Activated naive CD4-positive, alpha-beta T cell treated with anti-CD3 and anti-CD28 coated beads for 36 hours (primary cell): ENCODE measurements at regions of chr17 and their contacts with region 1.

Region 1: DNA sequence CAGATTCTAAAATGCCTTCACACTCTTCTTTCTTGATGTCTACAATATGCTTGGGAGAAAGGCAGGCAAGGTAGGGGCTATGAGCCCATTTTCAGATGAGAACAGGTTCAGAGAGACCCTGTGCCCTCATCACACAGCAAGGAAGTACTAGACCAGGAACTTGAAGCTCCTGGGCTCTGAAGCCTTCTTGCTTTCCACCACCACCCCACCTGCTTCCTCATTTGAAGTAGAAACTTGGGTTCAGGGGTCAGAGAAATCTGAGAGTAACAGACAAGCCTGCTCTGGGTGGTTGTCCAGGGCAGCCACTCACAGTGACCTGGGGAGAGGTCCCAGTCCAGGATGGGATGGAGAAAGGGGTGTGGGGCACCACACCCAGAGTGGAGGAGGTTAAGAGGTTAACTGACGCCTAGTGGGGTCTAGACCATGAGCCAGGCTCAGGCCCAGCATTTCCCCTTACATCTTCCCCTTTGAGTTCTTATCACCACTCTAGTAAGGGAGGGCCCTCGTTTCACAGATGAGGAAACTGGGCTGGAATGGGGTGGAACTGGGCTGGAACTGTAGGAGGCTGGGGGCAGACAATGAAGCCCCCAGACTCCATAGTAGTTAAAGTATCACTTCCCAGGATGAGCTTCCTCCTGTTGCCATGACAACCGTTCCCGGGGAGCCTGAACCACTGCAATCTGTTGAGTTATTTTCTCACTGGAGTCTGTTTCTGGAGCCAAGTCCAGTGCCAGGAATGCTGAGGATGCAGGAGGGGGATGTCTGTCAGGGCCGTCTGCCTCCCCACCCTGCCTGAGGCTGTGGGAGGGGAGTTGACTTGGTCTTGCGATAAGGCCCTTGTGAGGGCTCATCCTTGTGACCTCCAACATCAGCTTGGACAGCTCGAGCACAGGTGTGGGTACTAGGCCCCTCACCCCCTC is 16.2 kb upstream of the PHF12 start:
- DNase-seq: no peak
- H3K4me3 Mint-ChIP-seq: no peak overlapping the region
- H3K27ac Mint-ChIP-seq: no peak overlapping the region
- H3K4me1 Mint-ChIP-seq: no peaks in the 10 kb centered on the region
- H3K27me3 Mint-ChIP-seq: peaks cover 4% of the 10 kb centered on the region

Region 2: DNA sequence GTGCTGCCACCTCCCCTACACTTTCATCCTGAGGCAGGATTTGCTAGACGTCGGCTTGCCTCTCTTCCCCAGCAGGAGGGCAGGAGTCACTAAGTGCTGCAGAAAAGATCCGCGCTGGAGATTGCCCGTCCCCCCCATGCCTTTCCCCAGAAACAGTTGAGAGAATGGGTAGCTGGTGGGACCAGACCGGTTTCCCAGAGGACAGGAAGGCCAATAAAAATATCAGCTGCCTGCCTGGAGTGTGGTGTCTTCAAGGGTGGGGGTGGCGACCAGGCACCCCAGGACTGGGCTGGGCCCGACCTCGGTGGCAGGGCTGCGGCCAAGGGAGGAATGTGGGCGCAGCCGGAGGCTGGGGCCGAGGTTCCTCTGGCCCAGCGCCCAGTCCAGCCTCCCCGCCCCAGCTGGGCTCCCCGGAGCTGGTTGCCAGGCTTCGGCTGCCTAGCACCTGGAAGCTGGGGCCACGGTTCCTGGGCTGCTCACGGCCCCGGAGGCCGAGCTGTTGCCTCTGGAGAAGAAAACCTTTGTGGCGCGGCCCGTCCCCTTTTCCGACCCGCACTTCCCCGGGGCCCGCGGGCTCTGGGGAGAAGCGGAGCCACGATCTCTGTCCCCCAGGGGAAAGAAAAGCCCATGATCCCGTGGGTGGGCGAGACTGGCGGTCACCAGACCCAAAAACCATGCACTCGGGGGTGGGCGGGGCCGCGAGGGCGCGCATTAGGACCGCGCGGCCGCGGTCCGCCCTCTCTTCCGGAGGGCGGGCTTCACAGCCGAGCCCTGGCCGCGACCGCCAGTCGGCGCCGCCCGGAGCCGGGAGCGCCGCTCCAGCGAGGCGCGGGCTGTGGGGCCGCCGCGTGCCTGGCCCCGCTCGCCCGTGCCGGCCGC is 224.0 kb before region 1 on chr17 and contains the start of gene TRAF4:
- CTCF ChIA-PET with region 1: no interaction called
- intact Hi-C with region 1: no loop called
- DNase-seq: peak; percentile 74
- H3K4me3 Mint-ChIP-seq: peak within 1 kb of the TSS; percentile 91
- H3K27ac Mint-ChIP-seq: peak within 1 kb of the TSS; percentile 85
- H3K4me1 Mint-ChIP-seq: peaks cover 45% of the 10 kb centered on the region
- H3K27me3 Mint-ChIP-seq: no peaks in the 10 kb centered on the region
- total RNA-seq, gene TRAF4: 75.9 to 80.4 TPM

Region 3: GRCh38 chr17:28889996-28890395 is 77.5 kb before region 1 on chr17:
- CTCF ChIA-PET with region 1: no interaction called
- intact Hi-C with region 1: no loop called
- DNase-seq: no peak
- H3K4me3 Mint-ChIP-seq: no peak overlapping the region
- H3K27ac Mint-ChIP-seq: peak overlapping the region; percentile 53
- H3K4me1 Mint-ChIP-seq: peaks cover 49% of the 10 kb centered on the region
- H3K27me3 Mint-ChIP-seq: no peaks in the 10 kb centered on the region

Region 4: DNA sequence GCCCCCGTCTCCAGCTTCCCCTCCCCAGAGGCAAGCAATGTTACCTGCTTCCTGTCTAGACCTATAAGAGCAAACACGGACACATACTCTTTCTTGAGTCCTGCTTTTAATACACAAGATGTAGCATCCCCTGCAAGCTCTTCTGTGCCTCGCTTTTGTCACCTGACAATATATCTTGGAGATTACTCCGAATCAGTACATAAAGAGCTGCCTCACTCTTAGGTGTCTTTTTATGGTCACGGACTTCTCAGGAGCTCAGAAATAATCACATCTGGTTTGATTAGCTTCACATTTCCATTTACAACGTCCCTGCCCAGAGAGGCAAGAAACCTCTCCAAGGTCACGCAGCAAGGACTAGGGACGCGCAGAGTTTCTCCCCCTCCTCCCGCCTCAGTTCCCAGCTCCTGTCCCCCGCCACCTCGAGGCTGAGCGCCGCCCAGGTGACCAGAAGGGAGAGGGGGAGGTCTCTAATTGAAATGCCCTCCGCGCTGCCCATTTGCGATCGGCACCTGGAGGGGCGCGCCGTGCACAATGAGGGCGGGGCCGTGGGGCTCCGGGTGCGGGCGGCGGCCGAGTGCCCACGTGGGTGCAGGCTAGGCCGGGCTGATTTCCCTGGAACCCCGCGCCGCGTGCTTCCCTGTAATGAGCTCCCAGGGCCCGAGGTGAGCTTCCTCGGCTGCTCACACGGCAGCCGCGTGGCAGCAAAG is 52.1 kb after region 1 on chr17:
- CTCF ChIA-PET with region 1: interaction called, 14 read pairs
- intact Hi-C with region 1: no loop called
- DNase-seq: no peak
- H3K4me3 Mint-ChIP-seq: no peak overlapping the region
- H3K27ac Mint-ChIP-seq: no peak overlapping the region
- H3K4me1 Mint-ChIP-seq: peaks cover 5% of the 10 kb centered on the region
- H3K27me3 Mint-ChIP-seq: peaks cover 41% of the 10 kb centered on the region

Region 5: DNA sequence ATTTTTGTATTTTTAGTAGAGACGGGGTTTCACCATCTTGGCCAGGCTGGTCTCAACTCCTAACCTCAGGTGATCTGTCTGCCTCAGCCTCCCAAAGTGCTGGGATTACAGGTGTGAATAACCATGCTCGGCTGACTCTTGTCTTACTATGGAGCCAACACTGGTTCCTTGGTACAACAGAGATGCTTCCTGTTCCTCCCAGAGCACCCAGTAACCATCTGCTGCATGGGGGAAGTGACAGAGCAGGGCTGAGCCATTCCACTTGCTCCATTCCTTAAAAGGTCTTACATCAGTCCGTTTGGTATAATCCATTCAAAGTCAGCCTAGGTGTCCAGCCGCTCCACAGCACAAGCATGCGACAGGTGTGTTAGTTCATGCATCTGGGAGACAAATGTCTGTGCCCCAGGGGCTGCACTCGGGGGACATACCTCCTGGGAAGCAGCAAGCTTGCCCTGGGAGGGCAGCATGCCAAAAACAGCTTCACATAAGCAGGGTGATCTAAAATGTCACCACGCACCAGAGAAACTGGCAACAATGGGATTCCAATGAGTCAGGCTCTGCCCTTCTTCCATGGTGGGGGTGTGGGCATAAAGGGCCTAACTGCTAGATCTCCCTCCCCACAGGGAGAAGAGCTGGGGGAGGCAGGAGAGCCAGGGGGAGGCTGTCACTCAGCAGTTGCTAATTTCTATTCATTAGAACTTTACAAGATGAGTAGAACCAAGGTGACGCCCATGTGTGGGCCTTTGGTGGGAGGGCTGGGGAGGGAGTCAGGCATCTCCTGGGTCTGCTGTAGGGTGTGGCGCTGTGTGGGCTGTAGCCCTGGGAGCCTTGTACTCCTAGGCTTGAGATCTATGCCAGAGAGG is 110.9 kb after region 1 on chr17:
- CTCF ChIA-PET with region 1: interaction called, 10 read pairs
- intact Hi-C with region 1: no loop called
- DNase-seq: no peak
- H3K4me3 Mint-ChIP-seq: no peak overlapping the region
- H3K27ac Mint-ChIP-seq: no peak overlapping the region
- H3K4me1 Mint-ChIP-seq: no peaks in the 10 kb centered on the region
- H3K27me3 Mint-ChIP-seq: no peaks in the 10 kb centered on the region

Region 6: GRCh38 chr17:29089601-29090044 is 122.1 kb after region 1 on chr17:
- CTCF ChIA-PET with region 1: interaction called, 11 read pairs
- intact Hi-C with region 1: no loop called
- DNase-seq: no peak
- H3K4me3 Mint-ChIP-seq: no peak overlapping the region
- H3K27ac Mint-ChIP-seq: no peak overlapping the region
- H3K4me1 Mint-ChIP-seq: no peaks in the 10 kb centered on the region
- H3K27me3 Mint-ChIP-seq: no peaks in the 10 kb centered on the region

Region 7: GRCh38 chr17:29102741-29103181 is 135.3 kb after region 1 on chr17:
- CTCF ChIA-PET with region 1: interaction called, 13 read pairs
- intact Hi-C with region 1: no loop called
- DNase-seq: no peak
- H3K4me3 Mint-ChIP-seq: no peak overlapping the region
- H3K27ac Mint-ChIP-seq: no peak overlapping the region
- H3K4me1 Mint-ChIP-seq: peaks cover 6% of the 10 kb centered on the region
- H3K27me3 Mint-ChIP-seq: no peaks in the 10 kb centered on the region

Region 8: DNA sequence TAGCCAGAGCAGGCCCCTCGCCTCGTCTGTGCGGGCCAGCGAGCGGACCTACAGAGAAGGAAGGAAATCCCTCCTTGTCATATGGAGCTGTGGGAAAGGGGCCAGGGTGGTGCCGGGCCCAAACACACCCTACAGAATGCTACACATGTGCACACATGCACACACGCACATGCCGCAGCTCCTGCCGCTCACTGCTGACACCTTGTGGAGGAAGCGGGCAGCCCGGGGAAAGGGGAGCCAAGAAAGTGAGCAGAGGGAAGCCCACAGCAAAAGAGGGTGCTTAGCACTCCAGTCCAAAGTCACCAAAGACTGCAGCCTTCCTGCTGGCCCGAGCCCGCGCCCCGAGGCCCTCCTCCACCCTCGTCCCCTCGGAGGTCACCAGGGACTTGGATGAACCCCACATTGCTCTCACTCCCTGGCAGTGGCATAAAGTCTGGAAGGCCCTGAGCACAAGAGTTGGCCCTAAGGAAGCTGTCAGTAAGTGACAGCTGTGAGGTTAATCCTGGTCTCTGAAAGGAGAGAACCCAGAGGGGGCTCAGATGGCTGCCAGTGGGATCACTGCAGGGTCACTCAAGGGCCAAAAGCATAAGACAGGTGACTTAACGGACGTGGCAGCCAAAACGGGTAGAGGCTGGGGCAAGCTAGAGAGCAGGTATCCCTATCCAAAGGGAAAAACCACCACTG is 144.5 kb after region 1 on chr17:
- CTCF ChIA-PET with region 1: interaction called, 302 read pairs
- intact Hi-C with region 1: loop called (anchors 1 kb)
- DNase-seq: peak; percentile 81
- H3K4me3 Mint-ChIP-seq: no peak overlapping the region
- H3K27ac Mint-ChIP-seq: no peak overlapping the region
- H3K4me1 Mint-ChIP-seq: peaks cover 7% of the 10 kb centered on the region
- H3K27me3 Mint-ChIP-seq: no peaks in the 10 kb centered on the region